ENCODE measurements at regions of chr22 and their contacts with region 1.

Region 1: DNA sequence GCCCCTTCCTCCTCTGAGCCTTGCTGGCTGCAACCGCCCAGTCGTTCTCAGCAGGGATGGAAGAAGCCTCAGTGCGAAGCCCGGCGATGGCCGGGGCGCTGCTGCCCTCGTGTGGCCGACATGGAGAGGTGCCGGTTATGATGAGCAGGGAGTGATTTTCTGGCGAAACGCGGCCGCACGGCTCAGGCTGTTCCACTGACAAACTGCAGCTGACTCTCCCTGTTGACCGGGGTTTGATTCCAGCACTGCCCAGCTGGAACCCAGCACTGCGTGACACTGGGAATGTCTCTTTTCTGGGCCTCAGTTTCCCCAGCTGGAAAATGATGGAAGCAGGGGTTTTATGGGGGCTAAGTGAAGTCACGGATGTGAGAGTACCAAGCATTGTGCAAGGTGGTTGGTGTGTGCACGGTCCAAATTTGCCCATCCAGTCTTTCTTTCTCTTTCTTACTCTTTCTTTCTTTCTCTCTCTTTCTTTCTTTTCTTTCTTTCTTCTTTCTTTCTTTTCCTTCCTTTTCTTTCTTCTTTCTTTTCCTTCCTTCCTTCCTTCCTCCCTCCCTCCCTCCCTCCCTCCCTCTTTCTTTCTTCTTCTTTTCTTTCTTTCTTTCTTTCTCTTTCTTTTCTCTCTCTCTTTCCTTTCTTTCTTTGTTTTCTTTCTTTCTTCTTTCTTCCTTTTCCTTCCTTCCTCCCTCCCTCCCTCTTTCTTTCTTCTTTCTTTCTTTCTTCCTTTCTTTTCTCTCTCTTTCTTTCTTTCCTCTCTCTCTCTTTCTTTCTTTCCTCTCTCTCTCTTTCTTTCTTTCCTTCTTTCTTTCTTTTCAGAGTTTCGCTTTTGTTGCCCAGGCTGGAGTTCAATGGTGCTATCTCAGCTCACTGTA is 25.8 kb upstream of the MPPED1 start:
- DNase-seq: peak; percentile 88
- ATAC-seq: peak; percentile 95

Region 2: DNA sequence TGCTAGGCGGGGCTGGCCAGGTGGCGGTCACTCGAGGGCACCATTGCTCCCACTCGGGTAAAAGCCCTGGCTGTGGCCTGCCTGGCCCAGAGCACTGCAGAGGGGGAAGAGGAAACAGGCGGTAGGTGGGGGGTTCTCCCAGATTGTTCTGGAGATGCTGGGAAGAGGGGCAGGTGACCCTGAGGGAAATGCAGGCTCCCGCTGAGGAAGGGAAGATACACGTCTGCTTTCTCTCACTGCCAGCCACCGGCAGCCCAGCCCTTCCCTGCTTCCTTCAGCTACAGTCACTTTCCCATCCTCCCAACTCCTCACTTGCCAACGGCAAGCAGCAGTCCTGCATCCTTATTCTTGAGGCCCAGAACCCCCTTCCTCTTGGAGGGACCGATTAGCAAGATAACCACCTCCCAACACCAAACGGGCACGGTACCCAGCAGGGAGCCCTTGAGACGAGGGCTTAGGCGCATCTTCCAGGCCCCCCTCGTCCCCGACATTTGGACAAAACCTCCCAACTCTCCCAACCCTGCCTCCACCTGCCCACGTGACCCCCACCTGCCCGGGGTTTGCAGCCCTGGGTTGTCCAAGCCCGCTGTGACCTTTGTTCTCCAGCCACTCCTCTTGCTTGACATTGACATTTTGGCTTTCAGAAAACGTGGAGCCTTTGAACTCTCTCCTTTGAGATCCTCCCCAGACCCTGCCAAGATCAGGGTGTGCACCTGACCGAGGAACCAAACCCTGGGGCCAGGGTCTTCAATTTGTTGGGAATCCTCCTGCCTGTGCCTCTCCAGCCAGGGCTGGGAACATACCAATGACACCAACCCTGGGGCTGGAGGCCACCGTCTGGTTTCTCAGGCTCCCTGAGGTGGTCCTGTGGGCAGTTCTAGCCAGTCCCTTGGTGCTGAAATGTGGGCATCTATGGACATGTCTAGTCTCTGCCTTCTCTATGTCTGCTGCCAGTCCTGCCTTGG is 150.3 kb before region 1 on chr22:
- intact Hi-C with region 1: loop called (anchors 1 kb)
- DNase-seq: no peak
- ATAC-seq: no peak

Region 3: GRCh38 chr22:43263645-43264514 is 122.1 kb before region 1 on chr22:
- intact Hi-C with region 1: loop called (anchors 10 kb)
- DNase-seq: no peak
- ATAC-seq: no peak

Region 4: DNA sequence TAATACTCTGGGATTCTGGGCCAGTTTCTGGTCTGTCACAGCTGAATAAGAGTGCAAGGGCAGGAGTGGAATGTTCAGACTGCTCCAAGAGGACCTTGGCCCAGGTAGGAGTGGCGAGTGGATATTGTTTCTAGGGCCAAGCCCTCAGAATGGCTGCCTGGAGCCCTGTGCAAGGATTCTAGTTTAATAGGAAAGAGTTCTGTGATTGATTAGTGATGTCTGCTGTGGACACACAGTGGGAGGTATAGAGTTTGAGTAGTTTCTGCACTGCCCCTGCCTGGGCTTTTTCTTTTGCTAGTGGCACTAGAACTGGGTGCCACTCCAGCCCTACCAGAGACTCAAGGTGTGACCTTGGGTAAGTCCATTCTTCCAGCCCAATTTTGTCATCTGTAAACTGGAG is 16.1 kb after region 1 on chr22:
- intact Hi-C with region 1: loop called (anchors 1 kb)
- DNase-seq: no peak
- ATAC-seq: no peak

Region 5: DNA sequence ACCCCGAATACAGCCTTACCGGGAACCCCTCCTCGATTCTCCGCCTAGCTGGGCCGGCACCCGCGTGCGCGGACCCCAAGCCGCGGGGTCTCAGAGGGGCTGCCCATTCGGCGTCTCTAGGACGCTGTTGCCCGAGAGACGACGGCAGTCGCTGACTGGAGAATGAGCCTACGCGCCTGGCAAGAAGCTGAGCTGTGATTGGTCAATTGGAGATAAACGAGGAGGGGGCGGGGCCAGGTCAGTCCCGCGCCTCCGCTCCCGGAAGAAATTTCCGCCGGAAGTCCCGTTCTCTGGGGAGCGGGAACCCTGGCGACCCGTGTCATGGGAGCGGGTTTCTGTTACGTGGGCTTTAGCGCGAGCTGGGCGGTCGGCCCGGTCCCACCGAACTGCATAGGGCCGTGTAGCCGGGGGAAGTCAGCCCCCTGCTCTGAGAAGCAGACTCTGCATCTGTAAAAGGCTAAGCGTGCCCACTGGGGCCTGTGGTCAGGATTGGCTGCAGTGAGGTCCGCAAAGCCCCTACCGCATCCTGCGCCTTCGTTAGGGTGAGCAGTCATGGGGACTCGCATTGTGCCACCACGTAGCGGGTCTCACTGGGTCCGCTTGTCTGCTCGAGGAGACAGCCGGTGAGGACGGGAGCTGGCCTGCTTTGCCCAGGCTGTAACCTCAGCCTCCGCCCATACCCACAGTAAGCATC is 426.3 kb after region 1 on chr22 and contains the start of gene EFCAB6:
- intact Hi-C with region 1: loop called (anchors 10 kb)
- DNase-seq: peak; percentile 97
- ATAC-seq: peak; percentile 99
- total RNA-seq, gene EFCAB6: 4.4 TPM